PC-3 (cell line): ENCODE measurements at regions of chr18 and their contacts with region 1.

Region 1: GRCh38 chr18:30271716-30272115 is 770.8 kb downstream of the DSC3 start:
- DNase-seq: peak; percentile 50
- ATAC-seq: peak; percentile 54; the same call in 1 of the 2 replicates
- H3K4me3 ChIP-seq: no peak overlapping the region
- H3K27ac ChIP-seq: no peak overlapping the region
- H3K4me1 ChIP-seq: no peaks in the 10 kb centered on the region
- H3K27me3 ChIP-seq: no peaks in the 10 kb centered on the region
- CTCF ChIP-seq: peak; percentile 54

Region 2: GRCh38 chr18:29616867-29617266 is 654.8 kb before region 1 on chr18:
- CTCF ChIA-PET with region 1: no interaction called
- POLR2A ChIA-PET with region 1: no interaction called
- intact Hi-C with region 1: loop called (anchors 10 kb)
- DNase-seq: no peak
- ATAC-seq: peak; percentile 37; the same call in 1 of the 2 replicates
- H3K4me3 ChIP-seq: no peak overlapping the region
- H3K27ac ChIP-seq: no peak overlapping the region
- H3K4me1 ChIP-seq: no peaks in the 10 kb centered on the region
- H3K27me3 ChIP-seq: no peaks in the 10 kb centered on the region
- CTCF ChIP-seq: 0 out of 2 replicates have a peak, but pooled peaks have one; percentile 12

Region 3: GRCh38 chr18:29874519-29875098 is 397.1 kb before region 1 on chr18:
- CTCF ChIA-PET with region 1: interaction called, 5 read pairs
- POLR2A ChIA-PET with region 1: no interaction called
- intact Hi-C with region 1: loop called (anchors 1 kb)
- DNase-seq: peak; percentile 63
- ATAC-seq: peak; percentile 64; the same call in 1 of the 2 replicates
- H3K4me3 ChIP-seq: no peak overlapping the region
- H3K27ac ChIP-seq: no peak overlapping the region
- H3K4me1 ChIP-seq: peaks cover 6% of the 10 kb centered on the region; the same call in 1 of the 2 replicates
- H3K27me3 ChIP-seq: no peaks in the 10 kb centered on the region
- CTCF ChIP-seq: peak; percentile 83

Region 4: GRCh38 chr18:29962579-29962978 is 309.1 kb before region 1 on chr18:
- CTCF ChIA-PET with region 1: no interaction called
- POLR2A ChIA-PET with region 1: no interaction called
- intact Hi-C with region 1: loop called (anchors 10 kb)
- DNase-seq: peak; percentile 28
- ATAC-seq: peak; percentile 67
- H3K4me3 ChIP-seq: no peak overlapping the region
- H3K27ac ChIP-seq: no peak overlapping the region
- H3K4me1 ChIP-seq: 0 out of 2 replicates have a peak, but pooled peaks cover 3% of the 10 kb centered on the region
- H3K27me3 ChIP-seq: no peaks in the 10 kb centered on the region
- CTCF ChIP-seq: no peak

Region 5: GRCh38 chr18:30034818-30035217 is 236.9 kb before region 1 on chr18:
- CTCF ChIA-PET with region 1: no interaction called
- POLR2A ChIA-PET with region 1: no interaction called
- intact Hi-C with region 1: no loop called
- DNase-seq: no peak
- ATAC-seq: no peak
- H3K4me3 ChIP-seq: no peak overlapping the region
- H3K27ac ChIP-seq: no peak overlapping the region
- H3K4me1 ChIP-seq: no peaks in the 10 kb centered on the region
- H3K27me3 ChIP-seq: no peaks in the 10 kb centered on the region
- CTCF ChIP-seq: no peak

Region 6: GRCh38 chr18:30208546-30208945 is 63.2 kb before region 1 on chr18:
- CTCF ChIA-PET with region 1: no interaction called
- POLR2A ChIA-PET with region 1: no interaction called
- intact Hi-C with region 1: no loop called
- DNase-seq: no peak
- ATAC-seq: no peak
- H3K4me3 ChIP-seq: no peak overlapping the region
- H3K27ac ChIP-seq: no peak overlapping the region
- H3K4me1 ChIP-seq: peaks cover 4% of the 10 kb centered on the region; the same call in 1 of the 2 replicates
- H3K27me3 ChIP-seq: no peaks in the 10 kb centered on the region
- CTCF ChIP-seq: no peak

Region 7: GRCh38 chr18:30595942-30596341 is 324.2 kb after region 1 on chr18:
- CTCF ChIA-PET with region 1: no interaction called
- POLR2A ChIA-PET with region 1: no interaction called
- intact Hi-C with region 1: no loop called
- DNase-seq: no peak
- ATAC-seq: 0 out of 2 replicates have a peak, but pooled peaks have one; percentile 24
- H3K4me3 ChIP-seq: no peak overlapping the region
- H3K27ac ChIP-seq: no peak overlapping the region
- H3K4me1 ChIP-seq: peaks cover 1% of the 10 kb centered on the region; the same call in 1 of the 2 replicates
- H3K27me3 ChIP-seq: no peaks in the 10 kb centered on the region
- CTCF ChIP-seq: no peak